Mammary epithelial cell (primary cell): ENCODE measurements at regions of chr2 and their contacts with region 1.

Region 1: DNA sequence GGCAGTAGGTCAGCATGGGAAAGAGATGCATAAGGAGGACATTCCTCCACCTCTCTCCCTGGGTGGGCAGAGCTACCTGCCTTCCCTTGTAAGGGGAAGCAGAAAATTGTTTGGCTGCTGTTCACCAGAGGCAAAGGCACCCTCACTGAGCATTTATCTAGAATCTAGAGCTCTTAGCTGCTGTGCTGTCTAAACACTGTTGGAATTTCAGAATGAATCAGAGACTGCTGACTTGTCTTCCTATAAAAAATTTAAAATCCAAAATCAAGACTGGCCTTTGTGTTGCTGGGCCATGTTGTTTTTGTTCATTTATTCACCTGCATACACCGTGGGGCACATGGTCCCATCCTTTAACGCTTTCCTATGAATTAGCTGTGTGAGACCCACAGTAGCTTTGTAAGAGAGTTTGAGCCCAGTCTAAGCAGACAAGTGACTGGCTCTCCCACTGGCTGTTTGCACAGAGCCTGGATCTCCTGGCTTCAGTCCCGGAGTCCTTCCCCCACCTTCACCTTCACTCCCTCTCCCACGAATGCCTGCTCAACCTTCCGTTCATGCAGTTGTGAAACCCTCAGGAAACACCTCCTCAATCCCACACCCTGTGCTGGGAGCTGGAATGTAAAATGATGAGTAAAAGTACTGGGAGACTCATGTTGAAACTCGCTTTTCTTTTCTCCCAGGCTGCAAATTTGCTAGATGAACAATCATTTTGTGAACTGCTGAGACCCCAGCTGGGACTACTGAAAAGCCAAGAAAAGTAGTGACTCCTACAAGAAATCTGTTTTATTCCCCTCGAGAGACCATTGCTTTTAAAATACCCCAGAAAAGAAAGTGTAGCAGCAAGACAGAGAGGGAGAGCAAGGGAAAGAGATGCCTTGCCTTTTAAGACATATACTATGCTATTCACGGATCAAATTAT is 76.2 kb downstream of the FAM168B start:
- DNase-seq: peak; percentile 98
- H3K4me3 ChIP-seq: peak overlapping the region; percentile 25 to 46 (median 40)
- H3K27ac ChIP-seq: peak overlapping the region; percentile 94
- H3K4me1 ChIP-seq: peaks cover 42% of the 10 kb centered on the region
- H3K27me3 ChIP-seq: no peaks in the 10 kb centered on the region
- CTCF ChIP-seq: peak in 1 of 2 donors; percentile 5

Region 2: GRCh38 chr2:130342533-130343275 is 674.4 kb before region 1 on chr2 and contains the start of gene IMP4:
- CTCF ChIA-PET with region 1: no interaction called
- dilution Hi-C with region 1: no loop called
- in situ Hi-C with region 1: no loop called
- intact Hi-C with region 1: loop called (anchors 5 kb)
- DNase-seq: peak; percentile 99
- H3K4me3 ChIP-seq: peak within 1 kb of the TSS; percentile 75 to 89 (median 87)
- H3K27ac ChIP-seq: peak within 1 kb of the TSS; percentile 77
- H3K4me1 ChIP-seq: peaks cover 11% of the 10 kb centered on the region
- H3K27me3 ChIP-seq: no peaks in the 10 kb centered on the region
- CTCF ChIP-seq: peak in 1 of 2 donors; percentile 55
- total RNA-seq, gene IMP4: 81.6 to 83.9 TPM

Region 3: DNA sequence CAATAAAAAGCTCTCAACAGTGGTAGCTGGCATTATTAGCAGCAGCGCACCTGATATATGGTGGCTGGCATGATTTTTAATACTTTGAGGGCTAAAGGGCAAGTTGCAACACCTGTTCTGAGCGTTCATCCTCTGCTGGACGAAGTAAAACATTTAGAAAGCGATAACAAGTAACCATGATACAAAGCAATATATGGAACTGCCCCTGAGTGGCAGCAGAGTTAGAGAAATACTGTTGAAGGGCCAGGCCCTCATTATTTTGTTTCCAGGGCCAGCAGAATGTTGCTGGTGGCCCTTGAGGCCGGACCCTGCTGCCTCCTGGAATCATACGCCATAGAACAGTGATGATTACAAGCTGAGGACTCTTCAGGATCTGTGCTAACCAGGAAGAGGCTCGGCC is 132.6 kb before region 1 on chr2:
- CTCF ChIA-PET with region 1: no interaction called
- dilution Hi-C with region 1: no loop called
- in situ Hi-C with region 1: no loop called
- intact Hi-C with region 1: loop called (anchors 5 kb)
- DNase-seq: no peak
- H3K4me3 ChIP-seq: no peak overlapping the region
- H3K27ac ChIP-seq: no peak overlapping the region
- H3K4me1 ChIP-seq: peaks cover 36% of the 10 kb centered on the region
- H3K27me3 ChIP-seq: no peaks in the 10 kb centered on the region
- CTCF ChIP-seq: peak in 1 of 2 donors; percentile 31

Region 4: GRCh38 chr2:130920415-130921163 is 96.5 kb before region 1 on chr2:
- CTCF ChIA-PET with region 1: no interaction called
- dilution Hi-C with region 1: no loop called
- in situ Hi-C with region 1: no loop called
- intact Hi-C with region 1: loop called (anchors 5 kb)
- DNase-seq: peak; percentile 61
- H3K4me3 ChIP-seq: no peak overlapping the region
- H3K27ac ChIP-seq: no peak overlapping the region
- H3K4me1 ChIP-seq: peaks cover 4% of the 10 kb centered on the region
- H3K27me3 ChIP-seq: no peaks in the 10 kb centered on the region
- CTCF ChIP-seq: peak; percentile 94 to 95

Region 5: GRCh38 chr2:130972410-130972809 is 44.7 kb before region 1 on chr2:
- CTCF ChIA-PET with region 1: no interaction called
- dilution Hi-C with region 1: no loop called
- in situ Hi-C with region 1: no loop called
- intact Hi-C with region 1: loop called (anchors 5 kb)
- DNase-seq: peak; percentile 88
- H3K4me3 ChIP-seq: no peak overlapping the region
- H3K27ac ChIP-seq: no peak overlapping the region
- H3K4me1 ChIP-seq: no peaks in the 10 kb centered on the region
- H3K27me3 ChIP-seq: no peaks in the 10 kb centered on the region
- CTCF ChIP-seq: no peak

Region 6: GRCh38 chr2:131076707-131077106 is 59.6 kb after region 1 on chr2:
- CTCF ChIA-PET with region 1: no interaction called
- dilution Hi-C with region 1: loop called (anchors 5 kb)
- in situ Hi-C with region 1: no loop called
- intact Hi-C with region 1: no loop called
- DNase-seq: no peak
- H3K4me3 ChIP-seq: no peak overlapping the region
- H3K27ac ChIP-seq: no peak overlapping the region
- H3K4me1 ChIP-seq: peaks cover 8% of the 10 kb centered on the region
- H3K27me3 ChIP-seq: no peaks in the 10 kb centered on the region
- CTCF ChIP-seq: no peak

Region 7: GRCh38 chr2:131093006-131093695 is 76.1 kb after region 1 on chr2 and contains the start of gene FAM168B:
- CTCF ChIA-PET with region 1: no interaction called
- dilution Hi-C with region 1: no loop called
- in situ Hi-C with region 1: no loop called
- intact Hi-C with region 1: loop called (anchors 5 kb)
- DNase-seq: peak; percentile 90
- H3K4me3 ChIP-seq: peak within 1 kb of the TSS; percentile 76 to 100 (median 99)
- H3K27ac ChIP-seq: peak within 1 kb of the TSS; percentile 89
- H3K4me1 ChIP-seq: no peaks in the 10 kb centered on the region
- H3K27me3 ChIP-seq: no peaks in the 10 kb centered on the region
- CTCF ChIP-seq: no peak
- total RNA-seq, gene FAM168B: 89.5 to 108 TPM